Ascending aorta (tissue), 2 donors: ENCODE measurements at regions of chr7 and their contacts with region 1.

Region 1: DNA sequence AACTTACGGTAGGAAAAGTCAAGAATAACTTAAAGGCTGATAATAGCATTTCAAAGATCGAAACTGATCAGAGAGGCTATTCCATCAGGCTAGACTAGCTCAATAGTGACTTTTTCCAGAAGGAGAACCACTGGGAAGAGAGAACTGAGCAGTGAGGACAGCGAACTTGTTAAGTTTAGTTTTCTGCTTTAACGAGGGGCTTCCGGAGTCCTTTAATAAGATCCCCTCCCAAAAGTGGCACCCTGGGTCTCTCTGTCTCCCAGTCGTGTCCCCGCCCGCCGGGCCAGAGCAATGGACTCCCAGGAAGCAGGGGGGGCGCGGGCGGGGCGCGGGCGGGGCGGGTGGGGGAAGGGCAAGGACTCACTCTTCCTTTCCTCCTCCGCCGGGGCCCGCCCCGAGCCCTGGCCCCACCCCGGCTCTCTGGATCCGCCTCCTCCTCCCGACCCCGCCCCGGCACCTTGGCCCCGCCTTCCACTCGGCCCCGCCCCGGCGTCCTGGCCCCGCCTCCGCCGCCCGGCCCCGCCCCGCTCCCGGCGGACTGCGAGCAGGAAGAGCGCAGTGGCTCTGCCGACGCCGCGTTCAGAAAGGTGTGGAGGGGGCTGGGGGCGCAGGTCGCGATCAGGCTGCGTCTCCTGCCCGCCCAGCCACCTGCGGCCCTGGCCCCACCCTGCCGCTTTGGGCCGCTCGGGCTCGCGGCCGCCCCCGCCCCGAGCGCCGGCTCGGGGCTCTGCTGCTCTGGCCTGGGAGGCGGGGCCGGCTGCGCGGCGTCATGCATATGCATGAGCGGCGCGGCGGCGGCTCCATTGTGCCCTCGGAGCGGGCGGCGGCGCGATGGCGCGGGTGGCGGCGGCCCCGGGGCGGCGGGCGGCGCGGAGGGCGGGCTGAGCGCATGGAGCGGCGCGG is at the start of gene ZMIZ2:
- DNase-seq: peak; percentile 63 to 94
- H3K4me3 ChIP-seq: peak within 1 kb of the TSS; percentile 81 to 93
- H3K27ac ChIP-seq: peak within 1 kb of the TSS; percentile 88 to 98
- H3K4me1 ChIP-seq: peaks cover 4 to 15% of the 10 kb centered on the region in 2 donors
- H3K27me3 ChIP-seq: no peaks in the 10 kb centered on the region
- CTCF ChIP-seq: no peak
- total RNA-seq, gene ZMIZ2: 75.5 TPM

Region 2: GRCh38 chr7:44573464-44574286 is 174.6 kb before region 1 on chr7 and contains the start of gene DDX56:
- intact Hi-C with region 1: loop called (anchors 2 kb)
- DNase-seq: peak; percentile 64 to 96
- H3K4me3 ChIP-seq: peak within 1 kb of the TSS; percentile 87 to 97
- H3K27ac ChIP-seq: peak within 1 kb of the TSS; percentile 89 to 95
- H3K4me1 ChIP-seq: peaks cover 8 to 18% of the 10 kb centered on the region in 2 donors
- H3K27me3 ChIP-seq: no peaks in the 10 kb centered on the region
- CTCF ChIP-seq: no peak
- total RNA-seq, gene DDX56: 51.0 TPM

Region 3: DNA sequence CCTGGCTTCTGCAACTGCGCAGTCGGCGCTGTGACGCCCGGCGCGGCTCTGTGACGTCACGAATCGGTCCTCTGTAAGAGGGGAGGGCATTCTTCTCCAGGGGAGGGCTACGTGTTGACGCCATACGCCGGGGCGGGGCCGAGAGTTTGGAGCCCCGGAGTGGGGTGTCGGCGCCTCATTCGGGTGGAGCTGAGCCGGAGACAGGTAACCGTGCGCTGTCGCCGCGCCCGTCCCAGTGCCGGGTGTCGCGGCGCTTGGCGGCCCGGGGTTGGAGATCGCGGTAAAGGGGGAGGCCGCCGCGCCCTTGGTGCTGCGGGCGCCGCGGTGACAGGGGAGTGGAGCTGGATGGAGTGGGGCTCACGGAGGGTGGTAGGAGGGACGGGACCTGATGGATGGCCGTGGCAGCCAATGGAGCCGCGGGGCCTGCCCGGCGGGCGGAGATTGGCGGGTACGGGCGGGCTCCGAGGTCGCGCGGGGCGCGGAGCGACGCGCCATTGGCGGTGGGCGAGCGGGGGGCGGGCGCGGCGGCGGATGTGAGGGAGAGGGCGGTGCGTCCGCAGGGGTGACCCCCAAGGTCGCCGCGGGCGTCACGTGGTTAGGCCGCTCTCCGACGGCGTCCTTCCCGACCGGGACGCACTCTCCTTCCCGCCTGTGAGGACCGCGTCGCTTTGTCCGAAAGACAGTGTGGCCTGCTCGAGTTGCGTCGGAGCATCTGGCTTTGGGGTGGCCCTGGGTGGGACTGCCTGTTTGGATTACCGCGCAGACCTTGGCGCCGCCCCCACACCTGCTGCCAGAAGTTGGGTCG is 141.6 kb before region 1 on chr7 and contains the start of gene OGDH:
- intact Hi-C with region 1: loop called (anchors 1 kb)
- DNase-seq: peak; percentile 95 to 99
- H3K4me3 ChIP-seq: peak within 1 kb of the TSS; percentile 70 to 85
- H3K27ac ChIP-seq: peak within 1 kb of the TSS; percentile 95 to 99
- H3K4me1 ChIP-seq: peaks cover 0 to 7% of the 10 kb centered on the region in 2 donors
- H3K27me3 ChIP-seq: no peaks in the 10 kb centered on the region
- CTCF ChIP-seq: no peak
- total RNA-seq, gene OGDH: 117 TPM

Region 4: DNA sequence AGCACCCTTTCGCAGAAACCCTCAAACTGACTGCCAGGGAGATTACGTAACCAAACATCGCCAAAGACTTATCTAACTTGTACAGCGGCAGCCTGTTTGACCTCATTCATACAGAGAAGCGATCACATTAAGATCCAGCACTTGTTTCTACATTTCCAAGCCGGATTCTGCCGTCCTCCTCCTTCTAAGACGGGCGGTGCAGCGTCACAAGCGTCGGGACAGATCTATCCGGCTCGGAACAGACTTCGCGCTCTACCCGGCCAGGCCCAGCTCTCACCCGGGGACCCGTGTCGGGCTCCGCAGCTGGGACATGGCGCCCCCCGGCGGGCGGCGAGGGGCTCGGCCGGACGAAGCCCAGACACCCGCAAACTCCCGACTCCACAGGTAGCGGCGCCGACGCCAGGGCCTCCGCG is 99.2 kb after region 1 on chr7:
- intact Hi-C with region 1: loop called (anchors 1 kb)
- DNase-seq: peak; percentile 53 to 92
- H3K4me3 ChIP-seq: peak overlapping the region; percentile 68 to 87
- H3K27ac ChIP-seq: peak overlapping the region; percentile 91 to 94
- H3K4me1 ChIP-seq: peaks cover 3 to 17% of the 10 kb centered on the region in 2 donors
- H3K27me3 ChIP-seq: no peaks in the 10 kb centered on the region
- CTCF ChIP-seq: peak; percentile 89 to 98 (median 92)

Region 5: DNA sequence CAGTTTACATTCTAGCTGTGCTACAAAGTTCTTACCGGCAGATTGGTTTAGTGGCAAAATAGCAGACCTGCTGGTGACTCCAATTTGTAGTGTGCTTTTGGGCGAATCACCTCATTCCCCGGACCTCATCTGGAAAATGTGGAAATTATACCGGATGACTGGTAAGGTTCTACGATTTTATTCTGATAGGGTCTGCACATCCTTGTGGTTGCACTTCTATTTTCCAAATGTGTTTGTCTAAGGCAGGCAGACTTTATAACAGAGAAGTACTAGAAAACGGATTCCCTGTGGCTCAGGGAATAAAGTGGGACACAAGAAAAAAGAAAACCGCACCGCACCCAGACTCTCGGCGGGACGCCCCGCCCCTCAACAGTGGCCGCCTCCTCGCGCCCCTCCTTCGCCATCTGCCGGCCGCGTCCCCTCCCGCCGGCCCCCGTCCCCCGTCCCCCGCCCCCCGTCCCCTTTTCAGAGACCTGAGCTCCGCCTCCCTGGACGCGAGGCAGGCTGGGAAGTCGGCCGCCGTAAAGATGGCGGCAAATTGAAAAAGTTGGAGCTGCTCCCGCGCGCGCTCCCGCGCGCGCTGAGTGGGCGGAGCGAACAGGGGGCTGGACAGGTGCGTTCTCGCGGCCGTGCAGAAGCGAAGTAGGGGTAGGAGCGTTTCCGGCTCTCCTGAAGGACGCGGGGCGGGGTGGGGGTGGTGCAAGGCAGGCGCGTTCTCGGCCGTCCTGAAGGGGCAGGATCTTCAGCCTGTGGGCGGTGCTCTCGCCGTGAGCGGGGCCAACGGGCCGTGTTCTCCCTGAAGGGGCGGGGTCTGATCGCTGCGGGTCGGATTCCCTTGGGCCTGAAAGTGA is 251.2 kb after region 1 on chr7:
- intact Hi-C with region 1: loop called (anchors 1 kb)
- DNase-seq: peak; percentile 98 to 100
- H3K4me3 ChIP-seq: peak overlapping the region; percentile 87 to 96
- H3K27ac ChIP-seq: peak overlapping the region; percentile 78 to 96
- H3K4me1 ChIP-seq: peaks cover 0 to 18% of the 10 kb centered on the region in 2 donors
- H3K27me3 ChIP-seq: no peaks in the 10 kb centered on the region
- CTCF ChIP-seq: peak in 1 of 3 experiments; percentile 26